Heart left ventricle (tissue), 16 donors: ENCODE measurements at regions of chr5 and their contacts with region 1.

Region 1: DNA sequence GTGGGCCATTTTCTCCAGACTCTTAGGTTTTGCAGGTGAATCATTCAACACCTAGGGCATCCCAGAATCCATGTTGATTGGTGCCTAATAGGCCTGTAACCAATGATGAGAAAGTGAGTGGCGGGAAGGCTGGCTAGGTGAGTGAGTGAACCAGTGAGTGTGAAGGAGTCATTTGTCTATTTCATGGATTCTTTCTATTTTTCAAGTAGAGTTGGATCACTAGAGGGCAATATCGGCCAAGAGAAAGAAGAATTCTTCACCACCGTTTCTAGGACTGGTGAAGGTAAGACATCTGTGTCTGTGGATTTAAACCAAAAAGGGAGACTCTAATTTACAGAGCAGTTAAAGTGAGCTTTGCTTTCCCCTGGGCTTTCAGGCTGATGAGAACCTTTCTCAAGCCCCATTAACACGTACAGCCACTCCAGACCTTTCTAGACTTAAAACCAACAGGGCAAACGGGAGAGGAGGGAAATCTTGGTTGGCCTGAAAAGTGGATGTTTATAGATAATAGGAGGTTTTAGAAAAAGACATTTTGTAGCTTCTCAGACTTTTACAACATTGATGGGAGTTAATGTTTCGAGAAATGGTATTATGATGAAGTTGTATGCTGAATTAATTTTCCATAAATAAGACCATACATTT is 114.3 kb upstream of the IL12B start:
- DNase-seq: no peak
- ATAC-seq: peak in 1 of 4 donors; percentile 34
- H3K4me3 ChIP-seq: no peak overlapping the region
- H3K27ac ChIP-seq: no peak overlapping the region
- H3K4me1 ChIP-seq: peaks cover 0 to 28% (median 7%) of the 10 kb centered on the region in 12 donors
- H3K27me3 ChIP-seq: no peaks in the 10 kb centered on the region
- CTCF ChIP-seq: peak in 9 of 12 donors; percentile 9 to 55 (median 42)
- POLR2A ChIP-seq: no peak

Region 2: DNA sequence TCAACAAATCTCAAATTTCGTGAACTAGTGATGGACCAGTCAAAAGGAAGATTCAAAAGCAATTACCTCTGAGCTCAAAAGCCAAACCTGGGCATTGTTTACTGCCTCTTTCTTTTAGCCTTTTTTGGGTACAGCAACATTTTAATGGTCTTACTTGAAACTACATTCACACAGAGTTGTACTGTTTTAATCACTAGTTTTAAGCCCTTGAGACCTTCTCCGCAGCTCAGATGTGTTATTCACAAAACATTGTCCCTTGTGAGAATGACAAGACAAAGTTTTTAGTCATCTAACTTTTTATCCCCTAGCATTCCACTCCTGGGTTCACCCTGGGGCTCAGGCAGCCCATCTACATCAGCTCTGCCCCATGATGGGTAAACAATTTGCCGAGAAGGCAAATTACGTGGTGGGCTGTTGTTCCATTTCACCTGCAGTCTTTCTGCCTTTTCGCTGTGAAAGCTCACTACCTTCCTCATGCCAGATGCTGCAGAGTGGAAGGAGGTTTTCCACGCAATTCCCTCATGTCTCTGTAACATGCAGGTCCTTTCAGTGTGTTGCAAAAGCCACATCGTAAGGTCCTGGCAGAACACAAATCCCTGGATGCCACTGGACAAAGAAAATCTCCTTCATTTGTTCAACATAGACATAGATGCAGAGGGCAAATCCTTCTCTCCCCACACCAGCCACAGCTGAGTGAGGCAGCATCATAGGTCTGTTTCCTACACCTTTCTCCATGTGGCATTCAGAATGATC is 520.6 kb before region 1 on chr5:
- intact Hi-C with region 1: no loop called
- DNase-seq: no peak
- ATAC-seq: no peak
- H3K4me3 ChIP-seq: no peak overlapping the region
- H3K27ac ChIP-seq: no peak overlapping the region
- H3K4me1 ChIP-seq: peaks cover 0 to 11% (median under 1%) of the 10 kb centered on the region in 12 donors
- H3K27me3 ChIP-seq: no peaks in the 10 kb centered on the region
- CTCF ChIP-seq: no peak
- POLR2A ChIP-seq: no peak

Region 3: GRCh38 chr5:159316519-159317383 is 127.8 kb before region 1 on chr5:
- intact Hi-C with region 1: no loop called
- DNase-seq: peak in 2 of 5 donors; percentile 20 to 31
- ATAC-seq: peak; percentile 51 to 66 (median 58)
- H3K4me3 ChIP-seq: no peak overlapping the region
- H3K27ac ChIP-seq: no peak overlapping the region
- H3K4me1 ChIP-seq: no peaks in the 10 kb centered on the region
- H3K27me3 ChIP-seq: peaks cover 0 to 21% (median 0%) of the 10 kb centered on the region in 9 donors
- CTCF ChIP-seq: peak; percentile 26 to 63 (median 46)
- POLR2A ChIP-seq: no peak

Region 4: DNA sequence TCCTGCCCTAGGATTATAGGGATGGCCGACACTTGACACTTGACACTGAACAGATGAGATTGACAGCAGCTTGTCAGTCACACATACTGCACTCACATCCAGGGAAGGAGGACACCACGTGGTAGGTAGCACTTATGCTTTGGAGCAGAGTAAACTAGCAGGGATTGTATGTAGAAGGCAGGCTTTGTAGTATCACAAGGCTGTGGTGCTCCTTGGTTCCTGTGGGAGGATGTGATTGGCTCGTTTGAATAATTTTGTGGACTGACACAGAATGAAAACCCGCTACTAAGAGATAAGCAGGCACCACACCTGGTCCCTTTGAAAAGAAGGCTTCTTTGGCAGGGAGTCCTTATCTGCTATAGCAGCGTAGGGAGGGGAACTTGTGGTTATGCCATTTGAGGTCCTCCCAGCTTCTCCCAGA is 50.7 kb before region 1 on chr5:
- intact Hi-C with region 1: no loop called
- DNase-seq: no peak
- ATAC-seq: no peak
- H3K4me3 ChIP-seq: no peak overlapping the region
- H3K27ac ChIP-seq: no peak overlapping the region
- H3K4me1 ChIP-seq: no peaks in the 10 kb centered on the region
- H3K27me3 ChIP-seq: peaks cover 0 to 8% (median 0%) of the 10 kb centered on the region in 9 donors
- CTCF ChIP-seq: no peak
- POLR2A ChIP-seq: no peak

Region 5: GRCh38 chr5:159405611-159406031 is 38.9 kb before region 1 on chr5:
- intact Hi-C with region 1: no loop called
- DNase-seq: no peak
- ATAC-seq: no peak
- H3K4me3 ChIP-seq: no peak overlapping the region
- H3K27ac ChIP-seq: no peak overlapping the region
- H3K4me1 ChIP-seq: peaks cover 0 to 6% (median 0%) of the 10 kb centered on the region in 12 donors
- H3K27me3 ChIP-seq: peaks cover 0 to 4% (median 0%) of the 10 kb centered on the region in 9 donors
- CTCF ChIP-seq: no peak
- POLR2A ChIP-seq: no peak

Region 6: DNA sequence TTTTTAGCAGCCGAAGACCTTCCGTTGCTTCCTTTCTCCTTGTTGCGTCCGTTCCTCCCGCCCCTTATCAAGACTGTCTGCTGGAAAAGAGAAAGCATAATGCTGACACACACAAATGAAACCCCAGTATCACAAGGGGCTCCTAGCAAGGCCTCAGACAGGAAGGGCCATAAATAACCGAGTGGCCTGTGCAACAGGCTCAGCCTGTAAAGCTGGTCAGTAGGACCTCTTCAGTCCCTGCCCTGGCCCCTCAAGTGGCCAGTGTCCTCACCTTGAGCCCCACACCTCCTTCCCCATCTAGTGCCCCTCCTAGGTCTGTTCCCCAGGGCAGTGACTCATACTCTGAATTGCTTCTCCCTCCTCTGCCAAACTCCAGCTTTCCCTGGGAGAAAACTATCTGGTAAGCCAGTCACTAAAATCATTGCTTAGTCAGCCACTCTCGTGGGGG is 60.3 kb after region 1 on chr5:
- intact Hi-C with region 1: loop called in 3 of 10 experiments (anchors 5 kb)
- DNase-seq: peak in 4 of 5 donors; percentile 29 to 54 (median 38)
- ATAC-seq: peak; percentile 53 to 92 (median 76)
- H3K4me3 ChIP-seq: no peak overlapping the region
- H3K27ac ChIP-seq: peak overlapping the region in 11 of 12 donors; percentile 47 to 80 (median 73)
- H3K4me1 ChIP-seq: peaks cover 0 to 34% (median 15%) of the 10 kb centered on the region in 12 donors
- H3K27me3 ChIP-seq: no peaks in the 10 kb centered on the region
- CTCF ChIP-seq: no peak
- POLR2A ChIP-seq: no peak

Region 7: GRCh38 chr5:159657771-159658170 is 213.2 kb after region 1 on chr5:
- intact Hi-C with region 1: loop called in 1 of 10 experiments (anchors 5 kb)
- DNase-seq: no peak
- ATAC-seq: no peak
- H3K4me3 ChIP-seq: no peak overlapping the region
- H3K27ac ChIP-seq: no peak overlapping the region
- H3K4me1 ChIP-seq: peaks cover 0 to 12% (median 4%) of the 10 kb centered on the region in 12 donors
- H3K27me3 ChIP-seq: no peaks in the 10 kb centered on the region
- CTCF ChIP-seq: no peak
- POLR2A ChIP-seq: no peak

Region 8: GRCh38 chr5:159764283-159765134 is 319.9 kb after region 1 on chr5:
- intact Hi-C with region 1: loop called in 4 of 10 experiments (anchors 10 kb)
- DNase-seq: peak in 4 of 5 donors; percentile 33 to 50 (median 35)
- ATAC-seq: peak in 3 of 4 donors; percentile 75 to 81 (median 79)
- H3K4me3 ChIP-seq: no peak overlapping the region
- H3K27ac ChIP-seq: peak overlapping the region in 7 of 12 donors; percentile 5 to 49 (median 26)
- H3K4me1 ChIP-seq: peaks cover 0 to 24% (median 6%) of the 10 kb centered on the region in 12 donors
- H3K27me3 ChIP-seq: peaks cover 0 to 9% (median 0%) of the 10 kb centered on the region in 9 donors
- CTCF ChIP-seq: no peak
- POLR2A ChIP-seq: no peak

Region 9: GRCh38 chr5:159923008-159923407 is 478.4 kb after region 1 on chr5:
- intact Hi-C with region 1: loop called in 5 of 10 experiments (anchors 5 to 10 kb)
- DNase-seq: no peak
- ATAC-seq: no peak
- H3K4me3 ChIP-seq: no peak overlapping the region
- H3K27ac ChIP-seq: no peak overlapping the region
- H3K4me1 ChIP-seq: peaks cover 0 to 13% (median under 1%) of the 10 kb centered on the region in 12 donors
- H3K27me3 ChIP-seq: peaks cover 0 to 3% (median 0%) of the 10 kb centered on the region in 9 donors
- CTCF ChIP-seq: no peak
- POLR2A ChIP-seq: no peak

Region 10: DNA sequence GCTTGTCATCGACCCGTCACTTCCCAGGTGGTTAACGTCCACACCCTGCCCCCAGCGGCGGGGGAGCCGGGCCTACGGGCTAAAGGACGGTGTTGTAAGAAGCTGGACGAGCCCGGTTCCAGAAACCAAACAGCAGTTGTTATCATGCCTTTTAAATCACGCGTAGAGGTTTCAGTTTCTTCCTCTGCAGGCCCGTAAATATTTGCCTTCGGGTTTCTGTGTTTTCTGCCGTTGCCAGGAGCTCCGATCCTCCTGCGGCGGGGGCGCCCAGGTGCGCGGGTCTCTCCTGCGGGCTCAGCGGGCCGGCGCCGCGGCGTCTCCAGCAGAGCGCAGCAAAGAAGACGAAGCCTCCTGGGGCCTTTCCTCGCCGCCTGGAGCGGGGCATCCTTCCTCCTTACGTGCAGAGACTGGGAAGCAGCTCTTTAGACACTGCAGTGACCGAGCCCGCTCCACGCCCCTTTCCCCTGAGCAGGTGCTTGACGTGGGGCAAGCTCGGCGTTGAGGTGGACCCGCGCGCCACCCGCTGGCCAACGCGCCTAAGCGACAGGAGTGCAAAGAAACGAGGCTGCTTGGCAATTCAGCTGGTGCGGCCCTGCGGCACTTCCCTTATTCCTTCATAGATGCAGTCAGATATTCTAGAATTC is 542.6 kb after region 1 on chr5:
- intact Hi-C with region 1: loop called (anchors 1 to 5 kb)
- DNase-seq: peak; percentile 62 to 84 (median 75)
- ATAC-seq: peak; percentile 66 to 95 (median 92)
- H3K4me3 ChIP-seq: peak overlapping the region; percentile 18 to 60 (median 46)
- H3K27ac ChIP-seq: no peak overlapping the region
- H3K4me1 ChIP-seq: peaks cover 0 to 9% (median 4%) of the 10 kb centered on the region in 12 donors
- H3K27me3 ChIP-seq: peaks cover 0 to 27% (median 2%) of the 10 kb centered on the region in 9 donors
- CTCF ChIP-seq: peak; percentile 38 to 81 (median 64)
- POLR2A ChIP-seq: no peak